Activated B cell treated with CpG ODN at 0.5 μM for 24 hours (primary cell): ENCODE measurements at regions of chr3 and their contacts with region 1.

Region 1: DNA sequence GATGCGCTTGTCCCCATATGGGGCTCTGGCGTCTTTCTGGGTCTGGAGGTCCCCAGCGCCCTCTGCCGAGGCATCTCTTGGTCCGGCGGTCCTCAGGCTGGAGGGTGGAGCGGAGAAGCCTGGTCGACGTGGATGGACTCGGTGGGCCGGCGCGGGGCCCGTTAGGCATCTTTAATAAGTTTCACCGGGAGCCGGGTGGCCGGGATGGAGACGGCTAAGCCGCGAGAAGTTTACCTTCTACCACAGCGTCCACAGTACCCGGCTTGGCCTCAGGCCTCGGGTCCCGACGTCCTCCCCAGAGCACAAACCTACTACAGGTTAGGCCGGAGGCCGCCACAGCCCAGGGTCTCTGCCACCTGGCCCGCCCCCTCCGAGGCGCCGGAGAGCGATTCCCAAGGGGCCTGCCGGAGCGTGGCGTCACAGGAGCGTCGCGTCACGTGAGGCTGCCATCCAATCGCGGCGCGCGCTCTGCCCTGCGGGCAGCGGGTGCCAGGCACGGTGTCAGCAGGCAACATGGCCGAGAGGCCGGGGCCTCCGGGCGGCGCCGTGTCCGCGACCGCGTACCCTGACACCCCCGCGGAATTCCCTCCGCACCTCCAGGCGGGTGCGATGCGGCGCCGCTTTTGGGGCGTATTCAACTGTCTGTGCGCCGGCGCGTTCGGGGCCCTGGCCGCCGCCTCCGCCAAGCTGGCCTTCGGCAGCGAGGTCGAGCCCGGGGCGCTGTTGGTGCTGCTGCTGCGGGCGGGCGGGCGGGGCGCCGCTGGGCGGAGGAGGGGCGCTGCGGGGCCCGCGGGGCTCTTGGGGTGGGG is at the start of gene TMEM42:
- DNase-seq: peak; percentile 90
- ATAC-seq: peak; percentile 97
- H3K4me3 Mint-ChIP-seq: peak within 1 kb of the TSS; percentile 88
- H3K27ac Mint-ChIP-seq: peak within 1 kb of the TSS; percentile 85
- H3K4me1 Mint-ChIP-seq: peaks cover 17% of the 10 kb centered on the region
- H3K27me3 Mint-ChIP-seq: no peaks in the 10 kb centered on the region
- CTCF ChIP-seq: no peak
- total RNA-seq, gene TMEM42: 12.4 and 13.1 TPM in 2 replicates

Region 2: DNA sequence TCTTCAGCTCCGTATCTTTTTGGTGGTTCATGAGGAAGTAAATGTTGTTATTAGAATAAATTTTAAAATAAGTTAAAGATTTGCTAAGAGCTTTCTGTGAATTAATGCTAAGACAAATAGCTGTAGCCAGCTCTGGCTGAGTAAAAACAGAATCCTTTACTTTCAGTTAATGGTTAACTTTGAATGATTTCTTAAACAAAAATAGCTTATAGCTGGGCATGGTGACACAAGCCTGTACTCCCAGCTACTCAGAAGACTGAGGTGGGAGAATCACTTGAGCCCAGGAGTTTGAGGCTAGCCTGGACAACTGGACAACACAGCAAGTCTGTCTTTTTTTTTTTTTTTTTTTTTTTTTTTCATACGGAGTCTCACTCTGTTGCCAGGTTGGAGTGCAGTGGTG is 498.0 kb before region 1 on chr3:
- CTCF ChIA-PET with region 1: no interaction called
- POLR2A ChIA-PET with region 1: interaction called, 11 read pairs
- intact Hi-C with region 1: no loop called
- DNase-seq: no peak
- ATAC-seq: no peak
- H3K4me3 Mint-ChIP-seq: no peak overlapping the region
- H3K27ac Mint-ChIP-seq: no peak overlapping the region
- H3K4me1 Mint-ChIP-seq: no peaks in the 10 kb centered on the region
- H3K27me3 Mint-ChIP-seq: no peaks in the 10 kb centered on the region
- CTCF ChIP-seq: no peak

Region 3: DNA sequence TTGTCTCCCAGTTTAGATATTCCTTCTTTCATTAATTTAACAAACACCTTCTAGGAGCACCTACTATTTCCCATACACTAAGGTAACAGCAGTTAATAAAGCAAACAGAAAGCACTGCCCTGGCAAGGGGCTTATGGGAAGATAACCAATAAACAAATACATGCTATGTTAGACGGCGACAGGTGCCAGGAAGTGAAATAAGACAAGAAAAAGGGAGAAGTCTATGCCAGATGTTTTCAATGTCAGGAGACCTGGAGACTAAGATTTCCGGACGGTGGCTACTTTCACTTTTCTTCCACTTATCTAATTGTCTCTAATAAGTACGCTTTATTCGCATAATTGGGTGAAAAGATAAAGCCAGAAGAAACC is 351.6 kb before region 1 on chr3:
- CTCF ChIA-PET with region 1: no interaction called
- POLR2A ChIA-PET with region 1: interaction called, 6 read pairs
- intact Hi-C with region 1: loop called (anchors 2 kb)
- DNase-seq: no peak
- ATAC-seq: peak; percentile 30
- H3K4me3 Mint-ChIP-seq: peak overlapping the region; percentile 95
- H3K27ac Mint-ChIP-seq: peak overlapping the region; percentile 92
- H3K4me1 Mint-ChIP-seq: peaks cover 40% of the 10 kb centered on the region
- H3K27me3 Mint-ChIP-seq: no peaks in the 10 kb centered on the region
- CTCF ChIP-seq: no peak

Region 4: GRCh38 chr3:44554626-44555592 is 306.7 kb before region 1 on chr3 and contains the start of gene ZKSCAN7:
- CTCF ChIA-PET with region 1: no interaction called
- POLR2A ChIA-PET with region 1: no interaction called
- intact Hi-C with region 1: loop called (anchors 5 kb)
- DNase-seq: peak; percentile 56
- ATAC-seq: peak; percentile 86
- H3K4me3 Mint-ChIP-seq: peak within 1 kb of the TSS; percentile 94
- H3K27ac Mint-ChIP-seq: peak within 1 kb of the TSS; percentile 87
- H3K4me1 Mint-ChIP-seq: peaks cover 20% of the 10 kb centered on the region
- H3K27me3 Mint-ChIP-seq: peaks cover 7% of the 10 kb centered on the region
- CTCF ChIP-seq: no peak
- total RNA-seq, gene ZKSCAN7: 6.8 and 9.2 TPM in 2 replicates

Region 5: GRCh38 chr3:44601749-44602148 is 259.9 kb before region 1 on chr3:
- CTCF ChIA-PET with region 1: no interaction called
- POLR2A ChIA-PET with region 1: no interaction called
- intact Hi-C with region 1: no loop called
- DNase-seq: no peak
- ATAC-seq: no peak
- H3K4me3 Mint-ChIP-seq: no peak overlapping the region
- H3K27ac Mint-ChIP-seq: no peak overlapping the region
- H3K4me1 Mint-ChIP-seq: no peaks in the 10 kb centered on the region
- H3K27me3 Mint-ChIP-seq: no peaks in the 10 kb centered on the region
- CTCF ChIP-seq: no peak

Region 6: DNA sequence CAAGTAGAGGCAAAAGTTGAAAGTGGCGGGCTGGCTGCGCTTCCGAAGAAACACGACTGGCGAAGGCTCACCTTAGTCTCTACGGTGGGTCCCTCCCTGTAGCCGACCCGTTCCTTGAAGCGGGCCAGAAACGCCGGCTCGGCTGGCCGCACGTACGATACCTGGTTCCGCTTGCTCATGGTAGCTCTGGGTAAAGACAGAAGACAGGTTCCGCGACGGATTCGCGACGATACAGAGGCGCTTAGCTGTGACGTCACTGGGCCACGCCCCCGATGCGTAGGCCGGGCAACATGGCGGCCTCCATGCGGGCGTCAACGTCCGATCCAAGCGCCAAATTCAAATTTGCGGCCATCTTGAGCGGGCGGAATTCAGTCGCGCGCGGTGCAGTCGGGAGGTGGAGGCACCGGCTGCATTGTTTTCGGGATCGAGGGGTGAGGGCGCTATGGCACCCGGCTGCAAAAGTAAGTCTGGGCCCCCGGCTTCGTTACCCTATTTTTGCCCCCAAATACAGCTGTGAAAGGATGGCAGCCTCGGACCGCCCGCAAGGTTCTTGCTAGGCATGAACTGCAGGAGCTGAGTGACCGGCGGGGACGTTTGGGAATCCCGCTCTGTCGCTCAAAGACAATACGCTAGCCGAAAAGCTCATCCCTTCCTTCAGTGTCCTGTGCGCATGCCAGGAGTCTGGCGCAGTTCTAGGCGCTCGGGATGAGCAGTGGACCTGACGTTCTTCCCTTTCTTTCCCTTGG is 100.0 kb before region 1 on chr3 and contains the starts of genes KIAA1143 and KIF15:
- CTCF ChIA-PET with region 1: no interaction called
- POLR2A ChIA-PET with region 1: interaction called, 4 read pairs
- intact Hi-C with region 1: loop called (anchors 1 kb)
- DNase-seq: peak; percentile 96
- ATAC-seq: peak; percentile 96
- H3K4me3 Mint-ChIP-seq: peak within 1 kb of the TSS; percentile 89
- H3K27ac Mint-ChIP-seq: peak within 1 kb of the TSS; percentile 85
- H3K4me1 Mint-ChIP-seq: peaks cover 25% of the 10 kb centered on the region
- H3K27me3 Mint-ChIP-seq: no peaks in the 10 kb centered on the region
- CTCF ChIP-seq: no peak
- total RNA-seq, gene KIAA1143: 35.4 and 43.6 TPM in 2 replicates
- total RNA-seq, gene KIF15: 2.4 and 3.1 TPM in 2 replicates

Region 7: DNA sequence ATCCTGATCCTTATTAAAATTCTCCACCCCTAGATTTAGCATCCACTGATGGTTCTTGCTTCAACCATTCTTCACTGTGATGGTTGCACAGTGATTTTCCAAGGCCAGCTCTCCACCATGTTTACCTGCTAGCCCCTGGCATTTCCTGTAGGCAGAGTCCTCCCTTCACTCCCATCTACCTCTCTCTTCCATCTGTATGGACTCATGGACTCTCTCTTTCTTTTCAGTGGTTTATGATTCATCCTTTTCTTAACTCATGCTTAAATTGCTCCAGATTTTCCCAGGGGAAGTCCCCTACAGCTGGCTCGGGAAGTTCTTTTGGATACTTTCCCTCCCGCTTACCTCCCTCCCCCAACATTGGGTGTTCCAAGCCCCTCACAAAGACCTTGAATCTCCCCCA is 31.5 kb after region 1 on chr3:
- CTCF ChIA-PET with region 1: no interaction called
- POLR2A ChIA-PET with region 1: no interaction called
- intact Hi-C with region 1: no loop called
- DNase-seq: no peak
- ATAC-seq: no peak
- H3K4me3 Mint-ChIP-seq: no peak overlapping the region
- H3K27ac Mint-ChIP-seq: no peak overlapping the region
- H3K4me1 Mint-ChIP-seq: peaks cover 5% of the 10 kb centered on the region
- H3K27me3 Mint-ChIP-seq: peaks cover 2% of the 10 kb centered on the region
- CTCF ChIP-seq: no peak

Region 8: DNA sequence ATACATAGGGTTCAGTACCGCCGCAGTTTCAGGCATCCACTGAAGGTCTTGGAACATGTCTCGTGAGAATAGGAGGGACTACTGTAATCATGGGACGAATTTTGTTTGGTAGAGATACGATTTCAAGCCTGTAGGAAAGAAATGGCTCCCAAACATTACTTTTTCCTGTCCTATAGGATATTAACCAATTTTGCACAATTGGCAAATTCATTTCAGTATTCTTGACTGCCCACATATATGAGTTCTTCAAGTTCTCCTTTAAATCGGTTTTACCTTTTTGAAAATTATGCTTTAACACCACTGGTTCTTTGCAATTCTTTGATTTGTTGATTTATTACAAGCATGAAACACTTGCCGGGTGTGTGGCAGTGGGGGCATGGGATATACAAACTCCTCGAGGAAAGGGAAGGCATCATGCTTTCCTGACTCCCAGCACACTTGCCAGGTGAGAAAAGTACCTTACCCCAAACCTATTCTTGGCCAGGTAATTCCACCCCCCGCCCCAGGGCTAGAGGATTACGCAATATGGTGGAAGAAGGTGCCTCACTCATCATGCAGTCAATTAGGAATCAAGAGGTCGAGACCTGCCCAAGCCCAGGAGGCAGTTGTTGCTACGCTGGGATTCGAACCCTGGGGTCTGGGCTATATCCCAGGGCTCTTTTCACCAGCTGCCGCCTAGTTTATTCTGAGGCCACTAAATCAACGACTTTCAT is 526.2 kb after region 1 on chr3:
- CTCF ChIA-PET with region 1: no interaction called
- POLR2A ChIA-PET with region 1: no interaction called
- intact Hi-C with region 1: loop called (anchors 1 kb)
- DNase-seq: no peak
- ATAC-seq: peak; percentile 4
- H3K4me3 Mint-ChIP-seq: peak overlapping the region; percentile 98
- H3K27ac Mint-ChIP-seq: peak overlapping the region; percentile 90
- H3K4me1 Mint-ChIP-seq: peaks cover 17% of the 10 kb centered on the region
- H3K27me3 Mint-ChIP-seq: peaks cover 9% of the 10 kb centered on the region
- CTCF ChIP-seq: no peak